ENCODE measurements at regions of chr1 and their contacts with region 1.

Region 1: GRCh38 chr1:198465201-198466144 is 75.0 kb downstream of the ATP6V1G3 start:
- DNase-seq: peak in 2 of 9 experiments; percentile 52 to 64
- ATAC-seq: peak; percentile 58
- H3K4me3 ChIP-seq: no peak overlapping the region
- H3K4me3 Mint-ChIP-seq: no peak overlapping the region
- H3K27ac ChIP-seq: no peak overlapping the region
- H3K27ac Mint-ChIP-seq: no peak overlapping the region
- H3K4me1 ChIP-seq: no peaks in the 10 kb centered on the region
- H3K4me1 Mint-ChIP-seq: peaks cover 3% of the 10 kb centered on the region
- H3K27me3 ChIP-seq: no peaks in the 10 kb centered on the region
- H3K27me3 Mint-ChIP-seq: no peaks in the 10 kb centered on the region
- CTCF ChIP-seq: peak; percentile 75

Region 2: DNA sequence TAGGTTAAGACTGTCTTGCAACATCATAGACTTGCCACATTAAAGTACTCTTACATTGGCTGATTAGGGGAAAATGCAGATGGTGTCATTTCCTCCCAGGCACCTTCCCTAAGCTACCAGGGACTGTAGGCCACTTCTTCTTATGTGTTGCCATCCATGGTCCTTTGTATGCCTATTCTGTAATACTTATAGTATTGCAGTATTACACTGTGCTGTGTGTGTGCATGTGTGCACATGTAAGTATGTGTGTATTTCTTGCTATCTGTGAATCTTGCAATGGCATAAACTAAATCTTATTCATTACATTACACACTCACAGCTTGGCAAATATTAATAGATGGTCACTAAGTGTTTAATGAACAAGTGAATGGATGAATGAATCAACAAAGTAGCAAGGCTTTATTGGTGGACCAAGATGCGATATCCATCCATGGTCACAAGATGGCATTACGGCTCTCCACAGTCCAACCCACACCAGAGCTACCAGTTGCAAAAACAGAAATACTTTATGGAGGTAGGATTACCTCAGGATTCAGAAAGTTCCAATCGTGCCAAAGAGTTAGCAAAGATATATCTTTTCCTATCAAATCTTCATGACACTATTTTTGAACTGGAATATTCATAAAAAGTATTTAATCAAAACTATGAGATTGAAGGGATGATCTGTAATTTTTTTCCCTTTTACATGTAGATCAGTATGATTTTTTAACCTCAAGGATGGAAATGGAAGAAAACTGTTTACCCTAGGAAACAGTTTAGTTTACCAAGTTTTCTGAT is 850.4 kb before region 1 on chr1:
- CTCF ChIA-PET with region 1: interaction called, 4 read pairs
- POLR2A ChIA-PET with region 1: no interaction called
- intact Hi-C with region 1: loop called (anchors 1 to 5 kb)
- DNase-seq: peak in 4 of 9 experiments; percentile 7 to 49 (median 28)
- ATAC-seq: peak; percentile 46
- H3K4me3 ChIP-seq: no peak overlapping the region
- H3K4me3 Mint-ChIP-seq: no peak overlapping the region
- H3K27ac ChIP-seq: no peak overlapping the region
- H3K27ac Mint-ChIP-seq: no peak overlapping the region
- H3K4me1 ChIP-seq: no peaks in the 10 kb centered on the region
- H3K4me1 Mint-ChIP-seq: no peaks in the 10 kb centered on the region
- H3K27me3 ChIP-seq: no peaks in the 10 kb centered on the region
- H3K27me3 Mint-ChIP-seq: no peaks in the 10 kb centered on the region
- CTCF ChIP-seq: peak; percentile 49

Measured in CD8-positive, alpha-beta T cell (primary cell).